PC-9 (cell line): ENCODE measurements at regions of chr6 and their contacts with region 1.

Region 1: GRCh38 chr6:45922728-45923351 is 92.8 kb downstream of the CLIC5 start:
- DNase-seq: peak; percentile 41 to 64
- H3K4me3 ChIP-seq: no peak overlapping the region
- H3K27ac ChIP-seq: no peak overlapping the region
- H3K4me1 ChIP-seq: 0 out of 2 replicates have a peak, but pooled peaks cover 3% of the 10 kb centered on the region
- H3K27me3 ChIP-seq: no peaks in the 10 kb centered on the region
- CTCF ChIP-seq: peak; percentile 84

Region 2: DNA sequence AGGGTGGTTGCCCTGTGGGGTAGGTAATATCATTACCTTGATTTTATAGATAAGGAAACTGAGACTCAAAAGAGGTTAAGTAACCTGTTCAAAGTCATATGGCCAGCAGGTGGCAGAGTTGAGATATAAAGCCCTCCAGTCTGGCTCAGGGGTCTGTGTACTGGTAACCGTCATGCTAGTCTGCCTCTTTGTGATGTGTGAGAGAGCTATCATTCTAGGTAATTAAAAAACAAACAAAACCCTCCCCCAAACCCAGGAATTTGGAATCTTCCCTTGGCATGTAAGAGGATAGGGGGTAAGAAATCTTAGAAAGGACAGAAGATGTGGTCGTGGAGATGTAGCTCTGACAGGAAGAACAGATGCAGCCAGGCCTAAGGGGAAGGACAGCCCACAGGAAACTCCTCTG is 1329.3 kb before region 1 on chr6:
- CTCF ChIA-PET with region 1: no interaction called
- POLR2A ChIA-PET with region 1: no interaction called
- intact Hi-C with region 1: loop called (anchors 2 kb)
- DNase-seq: peak; percentile 38 to 48
- H3K4me3 ChIP-seq: no peak overlapping the region
- H3K27ac ChIP-seq: no peak overlapping the region
- H3K4me1 ChIP-seq: no peaks in the 10 kb centered on the region
- H3K27me3 ChIP-seq: no peaks in the 10 kb centered on the region
- CTCF ChIP-seq: peak; percentile 80

Region 3: DNA sequence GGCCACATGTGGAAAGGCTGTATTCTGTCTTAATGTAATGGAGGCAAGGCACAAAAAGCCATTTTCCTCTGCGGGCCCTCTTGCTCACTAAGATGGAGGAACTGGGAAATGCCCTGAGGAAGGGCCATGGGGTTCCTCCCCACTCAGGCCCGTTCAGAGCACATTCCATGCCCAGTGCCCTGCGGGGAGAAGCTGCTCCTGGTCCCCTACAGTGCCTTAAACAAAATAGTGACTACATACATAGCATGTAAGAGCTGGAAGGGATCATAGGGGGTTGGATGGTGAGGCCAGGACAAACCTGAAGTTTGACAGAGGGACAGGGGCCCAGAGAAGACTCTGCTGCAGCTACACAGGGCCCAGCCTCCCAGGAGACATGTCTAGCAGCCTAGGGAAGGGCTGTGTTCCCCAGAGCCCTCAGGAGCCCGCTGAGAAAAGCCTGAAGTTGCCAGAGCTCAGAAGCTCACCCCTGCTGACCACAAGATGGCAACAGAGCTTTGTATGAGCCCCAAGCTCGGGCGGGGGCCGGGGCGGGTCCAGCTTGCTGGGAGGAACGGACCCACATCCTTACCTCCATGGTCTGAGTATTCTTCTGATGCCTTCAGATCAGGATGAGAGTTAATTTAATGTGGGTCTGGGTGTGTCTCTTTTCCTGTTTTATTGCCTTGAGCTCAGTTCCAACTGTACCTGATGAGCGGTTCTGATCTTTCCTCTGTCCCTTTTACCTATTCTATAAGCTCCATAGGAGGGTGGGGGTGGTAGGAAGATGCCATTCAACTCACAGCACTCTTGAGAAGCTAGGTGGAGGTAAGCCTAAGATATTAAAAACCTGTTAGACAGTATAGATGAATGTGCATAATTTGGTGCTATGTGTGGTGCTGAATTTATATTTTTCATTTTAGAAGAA is 1292.5 kb before region 1 on chr6:
- CTCF ChIA-PET with region 1: interaction called, 11 read pairs
- POLR2A ChIA-PET with region 1: no interaction called
- intact Hi-C with region 1: loop called (anchors 1 kb)
- DNase-seq: peak in 1 of 2 experiments; percentile 57
- H3K4me3 ChIP-seq: no peak overlapping the region
- H3K27ac ChIP-seq: no peak overlapping the region
- H3K4me1 ChIP-seq: no peaks in the 10 kb centered on the region
- H3K27me3 ChIP-seq: no peaks in the 10 kb centered on the region
- CTCF ChIP-seq: peak; percentile 74

Region 4: DNA sequence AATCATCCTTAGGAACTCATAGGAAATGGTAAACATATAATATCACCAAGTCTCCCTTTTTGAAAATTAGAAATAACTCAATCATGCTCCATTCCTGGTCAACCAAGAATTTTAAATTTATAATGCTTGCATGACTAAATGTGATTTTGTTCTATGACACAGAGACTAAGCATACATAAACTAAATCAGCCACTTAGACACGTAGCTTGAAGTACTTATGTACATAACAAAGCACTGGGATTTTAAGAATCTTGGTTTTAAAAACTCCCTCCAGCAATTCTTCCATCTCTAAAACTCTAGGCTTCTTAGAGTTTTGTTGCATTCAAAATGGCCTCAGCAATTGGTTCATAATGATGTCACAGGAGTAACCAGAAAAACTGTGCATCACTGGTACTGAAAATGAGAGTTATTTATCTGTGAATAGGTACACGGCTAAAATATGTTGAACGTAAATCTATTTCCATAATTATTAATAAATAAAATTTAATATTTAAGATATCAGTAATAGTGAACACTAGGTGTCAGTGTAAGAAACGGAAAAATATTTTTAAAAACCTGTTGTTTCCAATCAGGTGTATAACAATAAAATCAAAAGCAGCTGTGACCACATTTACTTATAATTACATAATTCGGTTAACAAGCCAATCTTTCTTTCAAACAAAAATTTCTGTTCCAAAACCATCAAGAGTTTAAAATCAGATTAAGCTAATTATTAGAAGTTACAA is 836.3 kb before region 1 on chr6:
- CTCF ChIA-PET with region 1: no interaction called
- POLR2A ChIA-PET with region 1: no interaction called
- intact Hi-C with region 1: loop called (anchors 5 kb)
- DNase-seq: no peak
- H3K4me3 ChIP-seq: no peak overlapping the region
- H3K27ac ChIP-seq: no peak overlapping the region
- H3K4me1 ChIP-seq: no peaks in the 10 kb centered on the region
- H3K27me3 ChIP-seq: no peaks in the 10 kb centered on the region
- CTCF ChIP-seq: peak; percentile 36; the same call in 1 of the 2 replicates

Region 5: DNA sequence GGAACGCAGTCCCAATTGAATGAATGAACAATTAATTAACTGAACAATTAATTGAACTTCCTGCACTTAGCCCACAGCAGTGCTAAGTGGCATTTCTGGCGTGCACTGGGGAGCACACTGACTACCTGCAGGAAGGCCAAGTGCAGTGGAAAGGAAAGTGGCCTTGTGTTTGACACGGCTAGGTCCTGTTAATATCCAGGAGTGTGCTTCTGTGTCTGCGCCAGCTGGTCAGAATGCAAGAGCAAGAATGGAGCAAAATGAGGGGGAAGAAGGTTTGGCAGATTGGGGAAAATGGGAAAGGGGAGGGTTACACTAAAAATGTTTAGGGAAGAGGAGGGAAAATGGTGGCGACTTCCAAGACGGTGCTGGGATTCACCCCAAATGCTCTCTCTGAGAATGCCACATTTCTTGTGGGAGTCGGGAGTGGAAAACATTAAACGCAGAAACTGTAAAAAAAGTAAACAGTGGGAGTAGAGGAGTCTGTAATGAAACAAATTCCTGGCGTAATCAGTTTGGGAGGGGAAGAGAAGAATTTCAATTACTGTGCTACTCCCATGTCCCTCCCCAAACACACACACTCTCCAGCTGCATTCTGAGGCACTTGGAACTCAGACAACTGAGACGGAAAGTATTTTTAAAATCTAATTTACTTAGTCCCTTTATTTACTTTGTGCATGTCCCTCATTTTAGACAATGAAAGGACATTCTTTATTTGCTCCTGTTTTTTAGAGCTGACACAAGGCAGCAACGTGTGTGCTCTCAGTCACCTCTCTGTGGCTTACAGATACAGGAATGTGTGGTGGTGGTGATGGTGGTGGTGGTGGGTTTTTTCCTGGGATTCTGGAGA is 28.7 kb after region 1 on chr6:
- CTCF ChIA-PET with region 1: no interaction called
- POLR2A ChIA-PET with region 1: no interaction called
- intact Hi-C with region 1: no loop called
- DNase-seq: no peak
- H3K4me3 ChIP-seq: no peak overlapping the region
- H3K27ac ChIP-seq: no peak overlapping the region
- H3K4me1 ChIP-seq: peaks cover 11% of the 10 kb centered on the region
- H3K27me3 ChIP-seq: peaks cover 3% of the 10 kb centered on the region; the same call in 1 of the 2 replicates
- CTCF ChIP-seq: no peak

Region 6: DNA sequence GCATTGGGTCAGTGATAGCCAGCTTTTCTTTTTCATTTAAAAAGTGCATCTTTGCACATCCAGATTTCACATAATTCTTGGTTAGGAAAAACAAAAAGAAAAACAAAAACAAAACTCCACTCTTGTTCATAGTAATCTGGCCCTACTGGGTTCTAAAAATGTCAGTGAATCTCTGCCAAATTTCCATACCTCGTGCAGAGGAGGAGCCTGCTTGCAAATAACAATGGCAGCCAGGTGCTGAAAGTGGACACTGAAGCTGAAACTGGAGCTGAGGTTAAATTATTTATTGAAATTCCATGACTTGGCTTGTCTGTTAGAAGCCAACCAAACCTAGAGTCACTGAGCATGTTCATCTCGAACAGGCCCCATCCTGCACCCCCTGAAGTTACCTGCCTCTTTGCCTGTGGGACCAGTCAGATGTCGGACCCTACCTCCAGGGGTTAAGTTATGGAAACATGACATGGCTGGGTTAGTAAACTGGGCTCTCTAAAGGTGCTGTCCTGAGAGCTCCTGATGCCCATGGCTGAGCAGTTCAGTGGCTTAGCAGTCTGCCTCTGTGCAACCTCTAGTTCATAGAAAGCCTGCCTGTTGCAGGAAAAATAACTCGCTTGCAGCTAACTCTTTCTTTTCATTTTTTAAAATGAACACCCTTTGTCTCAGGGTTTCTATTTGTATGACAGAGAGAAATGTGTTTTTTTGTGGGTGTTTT is 50.1 kb after region 1 on chr6:
- CTCF ChIA-PET with region 1: no interaction called
- POLR2A ChIA-PET with region 1: no interaction called
- intact Hi-C with region 1: no loop called
- DNase-seq: no peak
- H3K4me3 ChIP-seq: no peak overlapping the region
- H3K27ac ChIP-seq: no peak overlapping the region
- H3K4me1 ChIP-seq: no peaks in the 10 kb centered on the region
- H3K27me3 ChIP-seq: no peaks in the 10 kb centered on the region
- CTCF ChIP-seq: no peak